AG04449 (cell line): ENCODE measurements at regions of chr6 and their contacts with region 1.

Region 1: GRCh38 chr6:31087494-31088089 is 24.8 kb downstream of the C6orf15 start:
- DNase-seq: peak; percentile 23
- H3K4me3 ChIP-seq: no peak overlapping the region
- CTCF ChIP-seq: peak; percentile 77

Region 2: DNA sequence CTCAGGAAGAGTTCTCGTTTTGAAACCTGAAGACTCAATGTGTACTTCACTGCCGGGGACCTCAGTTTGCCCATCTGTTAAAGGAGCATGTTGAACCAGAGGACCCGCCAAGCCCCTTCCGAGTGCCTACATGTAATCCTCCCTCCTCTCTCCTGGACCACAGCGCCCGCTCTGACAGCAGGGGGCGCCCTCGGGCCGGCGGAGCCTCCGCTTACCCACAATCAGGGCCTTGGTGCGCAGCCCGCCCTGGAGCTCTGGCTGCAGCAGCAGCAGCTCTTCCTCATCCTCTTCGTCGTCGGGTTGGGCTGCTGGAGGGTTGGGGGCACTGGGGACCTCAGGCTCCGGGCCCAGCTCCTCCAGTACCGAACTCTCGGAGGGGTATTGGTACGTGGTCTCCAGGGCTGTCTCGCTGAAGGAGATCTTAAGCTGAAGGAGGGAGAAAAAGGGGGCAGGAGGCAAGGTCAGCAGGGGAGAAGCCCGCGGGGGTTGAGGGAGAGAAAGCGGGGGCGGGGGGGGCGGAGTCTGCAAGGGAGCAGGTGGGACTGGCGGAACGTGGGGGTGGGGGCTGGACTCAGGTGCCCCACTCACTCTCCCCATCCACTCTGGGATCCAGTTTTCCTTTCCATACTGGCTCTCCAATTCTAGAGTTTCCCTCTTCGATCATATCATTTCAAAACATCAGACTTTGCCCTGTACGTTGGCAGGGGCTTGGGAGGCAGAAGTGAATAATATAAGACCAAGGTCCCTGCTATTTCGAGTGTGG is 408.4 kb before region 1 on chr6:
- CTCF ChIA-PET with region 1: interaction called, 14 read pairs
- POLR2A ChIA-PET with region 1: no interaction called
- DNase-seq: no peak
- H3K4me3 ChIP-seq: peak overlapping the region; percentile 35
- CTCF ChIP-seq: peak; percentile 94

Region 3: DNA sequence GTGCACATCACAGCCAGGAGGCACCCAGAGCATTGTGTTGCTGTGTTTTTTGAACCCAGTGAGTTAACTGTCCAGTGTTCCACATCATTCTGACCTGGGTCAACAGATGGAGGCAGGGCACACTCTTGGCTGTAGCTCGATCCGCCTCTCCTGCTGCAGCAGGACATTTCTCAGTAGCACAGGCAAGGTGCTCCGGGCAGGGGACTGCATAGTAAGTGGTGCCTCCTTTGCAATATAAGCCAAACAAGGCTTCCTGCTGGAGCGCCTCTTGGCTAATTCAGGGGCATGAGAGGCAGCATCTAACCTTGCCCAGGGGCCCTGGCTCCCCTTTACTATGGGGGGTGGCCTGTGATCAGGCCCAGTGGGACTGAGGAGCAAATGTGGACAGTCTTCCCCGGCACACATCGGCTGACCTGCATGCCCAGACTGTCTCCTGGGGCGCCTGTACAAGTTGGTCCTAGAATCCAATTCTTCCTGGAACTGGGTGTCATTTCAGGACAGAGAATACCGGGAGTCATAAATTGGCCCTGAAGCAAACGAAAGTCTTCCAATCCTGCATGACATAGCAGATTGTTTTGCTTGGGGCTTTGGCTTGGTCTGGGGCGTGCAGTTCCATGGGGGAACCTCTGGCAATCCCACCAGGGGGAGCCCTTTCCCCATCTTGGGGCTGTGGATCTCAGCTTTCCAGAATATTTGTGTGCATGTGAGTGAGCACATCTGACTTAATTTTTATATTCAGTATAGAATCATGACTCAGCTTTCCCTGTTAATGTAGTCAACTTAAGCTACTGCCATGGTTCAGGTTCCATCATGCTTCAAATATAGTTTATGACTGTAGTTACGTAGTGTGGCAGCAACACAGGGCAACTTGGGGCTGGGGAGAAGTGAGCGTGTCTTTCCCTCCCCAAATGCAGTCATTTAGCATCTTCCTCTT is 259.3 kb before region 1 on chr6:
- CTCF ChIA-PET with region 1: interaction called, 78 read pairs
- POLR2A ChIA-PET with region 1: interaction called, 4 read pairs
- DNase-seq: peak; percentile 70
- H3K4me3 ChIP-seq: no peak overlapping the region
- CTCF ChIP-seq: peak; percentile 90

Region 4: GRCh38 chr6:30849903-30850651 is 237.5 kb before region 1 on chr6:
- CTCF ChIA-PET with region 1: no interaction called
- POLR2A ChIA-PET with region 1: no interaction called
- DNase-seq: no peak
- H3K4me3 ChIP-seq: no peak overlapping the region
- CTCF ChIP-seq: no peak

Region 5: GRCh38 chr6:30926644-30927043 is 160.9 kb before region 1 on chr6:
- CTCF ChIA-PET with region 1: interaction called, 1,346 read pairs
- POLR2A ChIA-PET with region 1: no interaction called
- DNase-seq: no peak
- H3K4me3 ChIP-seq: no peak overlapping the region
- CTCF ChIP-seq: no peak

Region 6: DNA sequence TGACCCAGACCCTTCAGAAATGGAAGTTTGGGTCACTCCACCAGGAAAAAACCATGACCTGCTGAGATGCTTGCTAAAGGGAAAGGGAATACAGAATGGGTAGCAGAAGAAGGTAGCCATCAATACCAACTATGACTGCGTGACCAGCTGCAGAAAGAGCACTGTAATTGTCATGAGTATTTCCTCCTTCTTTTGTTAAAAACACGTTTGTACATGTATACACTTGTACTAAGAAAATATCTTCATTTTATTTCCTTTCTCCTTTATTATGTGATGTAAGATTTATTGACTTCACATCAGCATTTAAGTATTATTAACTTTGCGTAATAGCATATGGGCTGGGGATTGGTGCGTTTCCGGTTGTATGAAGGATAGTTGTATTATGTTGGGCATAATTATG is 116.6 kb before region 1 on chr6:
- CTCF ChIA-PET with region 1: no interaction called
- POLR2A ChIA-PET with region 1: no interaction called
- DNase-seq: no peak
- H3K4me3 ChIP-seq: no peak overlapping the region
- CTCF ChIP-seq: no peak

Region 7: GRCh38 chr6:31042806-31043205 is 44.8 kb before region 1 on chr6:
- CTCF ChIA-PET with region 1: interaction called, 10 read pairs
- POLR2A ChIA-PET with region 1: no interaction called
- DNase-seq: no peak
- H3K4me3 ChIP-seq: no peak overlapping the region
- CTCF ChIP-seq: peak; percentile 77

Region 8: GRCh38 chr6:31103136-31103535 is 15.5 kb after region 1 on chr6:
- CTCF ChIA-PET with region 1: interaction called, 36 read pairs
- POLR2A ChIA-PET with region 1: no interaction called
- DNase-seq: no peak
- H3K4me3 ChIP-seq: no peak overlapping the region
- CTCF ChIP-seq: no peak

Region 9: GRCh38 chr6:31414771-31415265 is 327.2 kb after region 1 on chr6:
- CTCF ChIA-PET with region 1: no interaction called
- POLR2A ChIA-PET with region 1: no interaction called
- DNase-seq: no peak
- H3K4me3 ChIP-seq: no peak overlapping the region
- CTCF ChIP-seq: no peak